Upper lobe of right lung (tissue), 1 donor: ENCODE measurements at regions of chr9 and their contacts with region 1.

Region 1: DNA sequence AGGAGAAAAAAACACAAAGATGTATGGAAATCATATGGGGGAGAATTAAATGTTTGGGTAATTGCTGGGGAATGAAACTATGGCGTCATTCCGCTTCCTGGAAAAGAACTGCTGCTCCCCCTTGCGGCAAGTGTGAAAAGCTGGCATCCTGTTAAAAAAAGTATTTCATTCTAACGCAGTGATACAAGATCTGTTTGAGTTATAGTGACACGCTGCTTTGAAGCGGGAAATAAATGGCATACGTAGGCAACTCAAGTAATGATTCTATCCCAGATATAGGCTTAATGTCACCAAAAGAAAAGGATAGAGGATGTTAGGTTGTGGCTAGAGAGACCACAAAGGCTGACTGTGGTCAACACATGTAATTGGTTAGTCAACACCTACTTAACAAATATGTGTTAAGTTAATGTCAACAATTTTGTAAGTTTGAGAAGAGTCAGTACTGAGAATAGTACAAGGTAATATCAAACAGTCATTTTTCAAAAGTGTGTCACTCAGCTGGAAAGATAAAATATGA is 70.2 kb upstream of the ALDH1A1 start:
- DNase-seq: no peak
- ATAC-seq: peak; percentile 81
- H3K4me3 ChIP-seq: no peak overlapping the region
- H3K27ac ChIP-seq: no peak overlapping the region
- H3K4me1 ChIP-seq: no peaks in the 10 kb centered on the region
- H3K27me3 ChIP-seq: no peaks in the 10 kb centered on the region
- CTCF ChIP-seq: peak; percentile 90

Region 2: DNA sequence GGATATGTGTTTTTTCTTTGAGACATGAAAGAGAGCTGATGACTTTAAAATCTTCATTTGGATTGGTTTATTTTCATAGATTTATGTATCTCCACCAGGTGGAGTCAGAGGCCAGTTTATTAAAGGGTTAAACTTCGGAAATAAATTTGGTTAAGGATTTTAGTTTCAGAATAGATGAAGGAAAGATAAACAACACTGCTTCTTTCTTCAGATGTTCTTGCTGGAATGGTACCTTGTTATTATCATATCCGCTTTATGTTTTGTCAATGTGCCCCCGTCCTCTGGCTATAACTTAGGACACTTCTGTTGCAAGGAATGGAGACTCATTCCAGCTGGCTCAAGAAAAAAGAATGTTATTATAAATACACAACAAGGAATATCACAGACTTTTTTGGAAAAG is 151.4 kb before region 1 on chr9:
- intact Hi-C with region 1: loop called (anchors 10 kb)
- DNase-seq: no peak
- ATAC-seq: no peak
- H3K4me3 ChIP-seq: no peak overlapping the region
- H3K27ac ChIP-seq: no peak overlapping the region
- H3K4me1 ChIP-seq: peaks cover 9% of the 10 kb centered on the region
- H3K27me3 ChIP-seq: no peaks in the 10 kb centered on the region
- CTCF ChIP-seq: peak; percentile 41

Region 3: GRCh38 chr9:72948906-72949582 is 74.0 kb before region 1 on chr9:
- intact Hi-C with region 1: loop called (anchors 5 kb)
- DNase-seq: no peak
- ATAC-seq: no peak
- H3K4me3 ChIP-seq: peak overlapping the region; percentile 49
- H3K27ac ChIP-seq: peak overlapping the region; percentile 2
- H3K4me1 ChIP-seq: peaks cover 34% of the 10 kb centered on the region
- H3K27me3 ChIP-seq: no peaks in the 10 kb centered on the region
- CTCF ChIP-seq: no peak

Region 4: DNA sequence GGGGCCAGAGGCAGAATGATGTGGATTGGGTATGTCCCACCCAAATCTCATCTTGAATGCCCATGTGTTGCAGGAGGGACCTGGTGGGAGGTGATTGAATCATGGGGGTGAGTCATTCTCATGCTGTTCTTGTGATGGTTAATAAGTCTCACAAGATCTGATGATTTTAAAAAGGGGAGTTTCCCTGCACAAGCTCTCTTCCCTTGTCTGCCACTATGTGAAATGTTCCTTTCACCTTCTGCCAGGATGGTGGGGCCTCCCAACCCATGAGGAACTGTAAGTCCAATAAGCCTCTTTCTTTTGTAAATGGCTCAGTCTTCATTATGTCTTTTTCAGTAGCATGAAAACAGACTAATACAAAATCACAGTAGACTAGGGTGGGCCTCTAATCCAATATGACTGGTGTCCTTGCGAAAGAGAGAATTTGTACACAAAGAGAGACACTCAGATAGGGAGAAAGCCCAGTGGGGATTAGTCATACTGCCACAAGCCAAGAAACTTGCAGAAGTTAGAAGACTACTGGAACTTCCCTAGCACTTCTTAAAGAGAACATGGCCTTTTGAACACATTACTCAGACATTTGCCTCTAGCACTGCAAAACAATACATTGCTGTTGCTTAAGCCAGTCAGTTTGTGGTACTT is 197.0 kb after region 1 on chr9:
- intact Hi-C with region 1: no loop called
- DNase-seq: no peak
- ATAC-seq: peak; percentile 96
- H3K4me3 ChIP-seq: no peak overlapping the region
- H3K27ac ChIP-seq: peak overlapping the region; percentile 18
- H3K4me1 ChIP-seq: no peaks in the 10 kb centered on the region
- H3K27me3 ChIP-seq: no peaks in the 10 kb centered on the region
- CTCF ChIP-seq: no peak